ENCODE measurements at regions of chr1 and their contacts with region 1.

Region 1: DNA sequence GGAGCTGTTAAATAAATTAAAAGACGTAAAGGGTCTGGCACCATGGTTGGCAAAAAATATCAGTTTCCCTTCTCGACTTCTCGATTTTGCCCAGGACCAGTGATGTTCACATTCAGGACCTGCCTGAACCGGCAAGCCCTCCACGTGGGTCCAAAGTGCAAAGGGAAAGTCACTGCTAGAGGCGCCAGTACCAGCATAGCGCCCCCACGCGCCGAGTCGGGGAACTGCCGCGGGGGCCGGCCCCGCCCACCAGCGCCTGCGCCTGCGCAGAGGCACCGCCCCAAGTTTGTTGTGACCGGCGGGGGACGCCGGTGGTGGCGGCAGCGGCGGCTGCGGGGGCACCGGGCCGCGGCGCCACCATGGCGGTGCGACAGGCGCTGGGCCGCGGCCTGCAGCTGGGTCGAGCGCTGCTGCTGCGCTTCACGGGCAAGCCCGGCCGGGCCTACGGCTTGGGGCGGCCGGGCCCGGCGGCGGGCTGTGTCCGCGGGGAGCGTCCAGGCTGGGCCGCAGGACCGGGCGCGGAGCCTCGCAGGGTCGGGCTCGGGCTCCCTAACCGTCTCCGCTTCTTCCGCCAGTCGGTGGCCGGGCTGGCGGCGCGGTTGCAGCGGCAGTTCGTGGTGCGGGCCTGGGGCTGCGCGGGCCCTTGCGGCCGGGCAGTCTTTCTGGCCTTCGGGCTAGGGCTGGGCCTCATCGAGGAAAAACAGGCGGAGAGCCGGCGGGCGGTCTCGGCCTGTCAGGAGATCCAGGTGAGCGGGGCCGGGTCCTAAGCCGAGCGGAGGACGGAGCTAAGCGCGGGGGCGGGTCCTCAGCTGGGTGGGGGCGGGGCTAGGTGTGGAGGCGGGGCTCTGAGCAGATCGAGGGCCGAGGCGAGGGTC is at the start of gene PINK1:
- DNase-seq: peak; percentile 57
- ATAC-seq: peak; percentile 87
- H3K4me3 ChIP-seq: peak within 1 kb of the TSS; percentile 60 to 61
- H3K27ac ChIP-seq: peak within 1 kb of the TSS; percentile 95
- H3K4me1 ChIP-seq: peaks cover 8 to 22% of the 10 kb centered on the region in 2 experiments
- H3K27me3 ChIP-seq: no peaks in the 10 kb centered on the region
- CTCF ChIP-seq: peak; percentile 85 to 98 (median 95)
- POLR2A ChIP-seq: no peak
- RAD21 ChIP-seq: peak; percentile 84
- total RNA-seq, gene PINK1: 29.4 TPM

Region 2: DNA sequence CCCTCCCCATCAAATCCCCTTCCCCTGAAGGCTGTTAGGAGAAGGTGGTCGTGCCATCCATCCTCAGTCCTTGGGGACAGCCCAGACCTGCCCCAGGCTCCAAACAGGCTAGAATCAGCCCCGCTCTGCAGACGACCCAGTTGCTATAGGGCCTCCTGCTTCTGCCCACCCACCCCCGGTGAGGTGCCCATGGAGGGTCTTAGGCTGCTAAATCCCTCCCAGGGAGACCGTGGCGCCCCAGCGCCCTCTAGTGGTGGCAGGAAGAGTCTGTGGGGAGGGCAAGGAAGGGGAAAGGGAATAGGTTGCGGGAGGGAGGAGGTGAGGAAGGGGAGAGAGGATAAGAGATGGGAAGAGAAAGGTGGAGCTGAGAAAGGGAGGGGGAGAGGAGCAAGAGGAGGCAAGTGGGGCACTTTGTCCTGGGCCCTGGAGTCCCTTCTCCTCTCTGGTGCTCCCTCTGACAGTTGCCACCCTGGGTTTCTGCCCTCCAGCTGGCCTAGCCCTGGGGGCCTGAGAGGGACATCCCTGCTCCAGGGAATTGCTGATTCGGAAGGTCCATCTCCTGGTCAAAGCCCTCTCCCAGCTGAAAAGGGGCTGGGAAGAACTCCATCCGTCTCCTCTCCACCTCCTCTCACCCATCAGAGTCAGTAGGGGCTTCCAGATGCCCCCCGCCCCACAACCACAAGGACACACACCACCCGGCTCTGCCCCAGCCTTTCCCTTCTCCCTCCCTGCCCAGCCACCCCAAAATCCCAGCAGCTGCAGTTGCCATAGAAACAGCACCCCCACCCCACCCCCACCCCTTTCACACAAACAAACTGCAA is 202.9 kb before region 1 on chr1:
- CTCF ChIA-PET with region 1: no interaction called
- POLR2A ChIA-PET with region 1: no interaction called
- RAD21 ChIA-PET with region 1: no interaction called
- intact Hi-C with region 1: loop called (anchors 5 kb)
- DNase-seq: no peak
- ATAC-seq: peak; percentile 87
- H3K4me3 ChIP-seq: no peak overlapping the region
- H3K27ac ChIP-seq: no peak overlapping the region
- H3K4me1 ChIP-seq: peaks cover 3 to 22% of the 10 kb centered on the region in 2 experiments; a peak in 2 of 4 replicates
- H3K27me3 ChIP-seq: no peaks in the 10 kb centered on the region
- CTCF ChIP-seq: peak; percentile 95 to 98 (median 95)
- POLR2A ChIP-seq: no peak
- RAD21 ChIP-seq: peak; percentile 94

Region 3: DNA sequence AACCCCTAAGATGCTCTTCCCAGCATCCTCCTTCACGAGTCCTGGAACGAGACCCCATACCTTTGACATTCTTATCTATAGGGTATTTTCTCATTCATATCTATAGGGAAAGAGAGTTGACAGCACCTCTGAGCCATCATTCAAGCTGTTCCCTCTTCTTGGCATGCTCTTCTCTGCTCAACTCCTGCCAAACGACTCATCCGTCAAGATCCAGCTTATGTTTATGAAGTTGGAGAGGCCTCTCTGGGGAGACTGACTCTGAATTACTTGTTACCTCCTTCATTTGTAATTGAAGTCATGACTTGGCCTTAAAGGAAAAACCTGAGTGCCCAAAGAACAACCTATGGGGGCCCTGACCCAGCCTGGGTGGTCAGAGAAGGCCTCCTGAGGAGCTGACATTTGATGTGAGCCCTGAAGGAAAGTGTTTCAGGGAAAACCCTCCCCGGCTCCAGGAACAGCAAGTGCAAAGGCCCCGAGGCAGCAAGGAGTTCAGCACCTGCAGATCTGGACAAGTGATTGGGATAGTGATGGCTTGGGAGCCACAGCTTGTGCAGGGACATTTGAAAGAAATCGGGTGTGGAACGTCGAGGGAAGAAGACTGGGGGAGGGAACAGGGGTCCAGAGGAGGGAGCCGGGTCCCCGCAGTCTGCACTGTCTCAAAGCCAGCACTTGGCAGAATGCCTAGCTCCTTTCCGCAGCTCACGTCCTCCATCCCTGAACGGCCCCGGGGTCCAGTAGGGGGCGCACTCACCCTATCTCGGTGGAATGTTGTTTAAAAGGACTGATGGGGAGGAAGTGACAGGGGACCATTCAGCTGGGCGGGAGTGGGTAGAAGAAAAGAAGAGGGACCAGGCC is 58.5 kb before region 1 on chr1:
- CTCF ChIA-PET with region 1: interaction called, 74 read pairs
- POLR2A ChIA-PET with region 1: interaction called, 10 read pairs
- RAD21 ChIA-PET with region 1: interaction called, 19 to 23 read pairs
- intact Hi-C with region 1: loop called (anchors 1 kb)
- DNase-seq: peak; percentile 85
- ATAC-seq: peak; percentile 86
- H3K4me3 ChIP-seq: no peak overlapping the region
- H3K27ac ChIP-seq: peak overlapping the region; percentile 61
- H3K4me1 ChIP-seq: peaks cover 17 to 44% of the 10 kb centered on the region in 2 experiments
- H3K27me3 ChIP-seq: 0 out of 2 replicates have a peak, but pooled peaks cover 2% of the 10 kb centered on the region
- CTCF ChIP-seq: peak; percentile 93 to 96 (median 95); a peak in 5 of 6 replicates
- POLR2A ChIP-seq: no peak
- RAD21 ChIP-seq: peak; percentile 97

Region 4: DNA sequence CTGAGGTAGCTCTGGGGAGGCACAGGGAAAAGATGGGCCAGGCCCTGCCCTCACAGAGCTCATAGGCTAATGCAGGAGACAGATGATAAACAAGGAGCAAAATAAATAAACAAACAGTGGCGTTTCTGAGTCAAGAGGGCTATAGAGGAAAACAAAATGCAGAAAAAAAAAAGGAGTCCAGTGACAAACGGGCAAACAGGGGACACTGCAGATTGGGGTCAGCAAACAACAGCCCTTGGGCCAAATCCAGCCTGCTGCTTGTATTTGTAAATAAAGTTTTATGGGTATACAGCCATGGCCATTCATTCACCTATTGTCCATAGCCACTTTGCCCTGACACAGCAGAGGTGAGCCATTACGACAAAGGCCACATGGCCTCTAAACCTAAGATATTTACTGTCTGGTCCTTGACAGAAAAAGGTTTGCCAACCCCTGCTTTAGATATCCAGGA is 19.3 kb before region 1 on chr1:
- CTCF ChIA-PET with region 1: interaction called, 10 read pairs
- POLR2A ChIA-PET with region 1: interaction called, 5 read pairs
- RAD21 ChIA-PET with region 1: interaction called in 1 of 2 experiments, 4 read pairs
- intact Hi-C with region 1: no loop called
- DNase-seq: no peak
- ATAC-seq: peak; percentile 6; the same call in 1 of the 2 replicates
- H3K4me3 ChIP-seq: no peak overlapping the region
- H3K27ac ChIP-seq: peak overlapping the region; percentile 94
- H3K4me1 ChIP-seq: peaks cover 34 to 45% of the 10 kb centered on the region in 2 experiments
- H3K27me3 ChIP-seq: no peaks in the 10 kb centered on the region
- CTCF ChIP-seq: no peak
- POLR2A ChIP-seq: no peak
- RAD21 ChIP-seq: no peak

Region 5: GRCh38 chr1:20661207-20662109 is 28.0 kb after region 1 on chr1 and contains the start of gene DDOST:
- CTCF ChIA-PET with region 1: interaction called, 14 read pairs
- POLR2A ChIA-PET with region 1: no interaction called
- RAD21 ChIA-PET with region 1: no interaction called
- intact Hi-C with region 1: no loop called
- DNase-seq: peak; percentile 97
- ATAC-seq: peak; percentile 96
- H3K4me3 ChIP-seq: peak within 1 kb of the TSS; percentile 90 to 100
- H3K27ac ChIP-seq: peak within 1 kb of the TSS; percentile 68
- H3K4me1 ChIP-seq: peaks cover 12 to 21% of the 10 kb centered on the region in 2 experiments
- H3K27me3 ChIP-seq: no peaks in the 10 kb centered on the region
- CTCF ChIP-seq: peak in 2 of 3 experiments; percentile 36 to 53; a peak in 4 of 6 replicates
- POLR2A ChIP-seq: peak; percentile 45
- RAD21 ChIP-seq: no peak
- total RNA-seq, gene DDOST: 387 TPM

Region 6: DNA sequence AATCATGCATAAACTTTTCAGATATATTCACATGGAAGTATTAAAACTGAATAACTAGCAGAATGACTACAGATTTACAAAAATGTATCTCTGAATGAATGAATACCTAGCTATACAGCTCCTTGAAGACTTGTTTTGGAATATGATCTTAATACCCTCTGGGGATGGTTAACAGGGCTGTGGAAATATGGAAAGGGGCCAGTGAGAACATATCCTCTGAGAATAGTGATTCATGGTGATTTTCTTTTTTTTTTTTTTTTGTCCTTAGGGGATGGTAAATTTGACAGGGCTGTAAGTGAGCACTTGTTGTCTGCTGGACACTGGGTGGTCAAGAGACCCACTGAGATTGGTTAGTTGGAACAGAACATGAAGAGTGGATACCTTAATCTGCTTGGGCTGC is 234.4 kb after region 1 on chr1:
- CTCF ChIA-PET with region 1: no interaction called
- POLR2A ChIA-PET with region 1: no interaction called
- RAD21 ChIA-PET with region 1: no interaction called
- intact Hi-C with region 1: no loop called
- DNase-seq: no peak
- ATAC-seq: no peak
- H3K4me3 ChIP-seq: no peak overlapping the region
- H3K27ac ChIP-seq: no peak overlapping the region
- H3K4me1 ChIP-seq: no peaks in the 10 kb centered on the region
- H3K27me3 ChIP-seq: no peaks in the 10 kb centered on the region
- CTCF ChIP-seq: no peak
- POLR2A ChIP-seq: no peak
- RAD21 ChIP-seq: no peak